Activated CD8-positive, alpha-beta T cell treated with anti-CD3 and anti-CD28 coated beads for 36 hours (primary cell): ENCODE measurements at regions of chr22 and their contacts with region 1.

Region 1: GRCh38 chr22:37965940-37966664 is 12.6 kb downstream of the POLR2F start:
- DNase-seq: no peak
- ATAC-seq: no peak
- H3K4me3 Mint-ChIP-seq: no peak overlapping the region
- H3K27ac Mint-ChIP-seq: no peak overlapping the region
- H3K4me1 Mint-ChIP-seq: no peaks in the 10 kb centered on the region
- H3K27me3 Mint-ChIP-seq: no peaks in the 10 kb centered on the region
- CTCF ChIP-seq: no peak

Region 2: GRCh38 chr22:37676736-37677492 is 289.2 kb before region 1 on chr22:
- CTCF ChIA-PET with region 1: no interaction called
- POLR2A ChIA-PET with region 1: no interaction called
- intact Hi-C with region 1: no loop called
- DNase-seq: peak; percentile 98
- ATAC-seq: peak; percentile 84
- H3K4me3 Mint-ChIP-seq: peak overlapping the region; percentile 77
- H3K27ac Mint-ChIP-seq: peak overlapping the region; percentile 93
- H3K4me1 Mint-ChIP-seq: peaks cover 70% of the 10 kb centered on the region
- H3K27me3 Mint-ChIP-seq: no peaks in the 10 kb centered on the region
- CTCF ChIP-seq: no peak

Region 3: GRCh38 chr22:37843741-37843990 is 122.4 kb before region 1 on chr22:
- CTCF ChIA-PET with region 1: no interaction called
- POLR2A ChIA-PET with region 1: no interaction called
- intact Hi-C with region 1: no loop called
- DNase-seq: peak; percentile 62
- ATAC-seq: peak; percentile 38
- H3K4me3 Mint-ChIP-seq: peak overlapping the region; percentile 89
- H3K27ac Mint-ChIP-seq: peak overlapping the region; percentile 87
- H3K4me1 Mint-ChIP-seq: peaks cover 21% of the 10 kb centered on the region
- H3K27me3 Mint-ChIP-seq: no peaks in the 10 kb centered on the region
- CTCF ChIP-seq: no peak

Region 4: GRCh38 chr22:37953437-37954179 is 12.5 kb before region 1 on chr22 and contains the starts of genes C22orf23 and POLR2F:
- CTCF ChIA-PET with region 1: interaction called, 31 read pairs
- POLR2A ChIA-PET with region 1: no interaction called
- intact Hi-C with region 1: no loop called
- DNase-seq: peak; percentile 98
- ATAC-seq: peak; percentile 96
- H3K4me3 Mint-ChIP-seq: peak within 1 kb of the TSS; percentile 97
- H3K27ac Mint-ChIP-seq: peak within 1 kb of the TSS; percentile 97
- H3K4me1 Mint-ChIP-seq: peaks cover 30% of the 10 kb centered on the region
- H3K27me3 Mint-ChIP-seq: peaks cover 14% of the 10 kb centered on the region
- CTCF ChIP-seq: no peak
- total RNA-seq, gene C22orf23: not detected
- total RNA-seq, gene POLR2F: 82.2 to 85.4 TPM

Region 5: DNA sequence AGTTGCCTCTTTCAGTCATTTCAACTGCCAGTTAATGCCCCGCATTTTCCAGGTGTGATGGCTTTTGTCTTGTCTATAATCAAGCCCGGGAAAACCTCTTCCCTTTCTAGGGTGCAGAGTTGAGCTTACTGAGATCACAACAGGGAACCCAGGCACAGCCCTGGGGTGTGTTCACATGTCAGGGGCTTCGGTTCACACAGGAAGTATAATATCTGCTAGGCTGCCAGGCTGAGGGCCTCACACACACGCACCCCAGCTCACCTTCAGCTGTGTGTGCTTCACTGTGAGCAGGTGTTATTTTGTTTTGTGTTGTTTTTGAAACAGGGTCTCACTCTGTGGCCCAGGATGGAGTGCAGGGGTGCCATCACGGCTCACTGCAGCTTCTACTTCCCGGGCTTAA is 27.9 kb after region 1 on chr22:
- CTCF ChIA-PET with region 1: interaction called, 14 read pairs
- POLR2A ChIA-PET with region 1: no interaction called
- intact Hi-C with region 1: no loop called
- DNase-seq: peak; percentile 9
- ATAC-seq: peak; percentile 42
- H3K4me3 Mint-ChIP-seq: no peak overlapping the region
- H3K27ac Mint-ChIP-seq: peak overlapping the region; percentile 55
- H3K4me1 Mint-ChIP-seq: peaks cover 25% of the 10 kb centered on the region
- H3K27me3 Mint-ChIP-seq: no peaks in the 10 kb centered on the region
- CTCF ChIP-seq: no peak